K562 (cell line): ENCODE measurements at regions of chr4 and their contacts with region 1.

Region 1: GRCh38 chr4:997375-998071 is 4.3 kb upstream of the SLC26A1 start:
- DNase-seq: peak; percentile 76 to 90 (median 87)
- ATAC-seq: peak; percentile 58
- H3K4me3 ChIP-seq: peak overlapping the region; percentile 47
- H3K27ac ChIP-seq: peak overlapping the region; percentile 81
- H3K4me1 ChIP-seq: peaks cover 37 to 76% of the 10 kb centered on the region in 2 experiments
- H3K27me3 ChIP-seq: no peaks in the 10 kb centered on the region
- CTCF ChIP-seq: no peak
- EP300 ChIP-seq: no peak
- POLR2A ChIP-seq: no peak; the same call in 1 of the 2 replicates
- RAD21 ChIP-seq: no peak

Region 2: GRCh38 chr4:1043658-1044468 is 46.3 kb after region 1 on chr4:
- CTCF ChIA-PET with region 1: no interaction called
- POLR2A ChIA-PET with region 1: interaction called, 3 read pairs
- in situ Hi-C with region 1: no loop called
- intact Hi-C with region 1: loop called (anchors 10 kb)
- DNase-seq: peak; percentile 94 to 96 (median 96)
- ATAC-seq: peak; percentile 87
- H3K4me3 ChIP-seq: no peak overlapping the region
- H3K27ac ChIP-seq: peak overlapping the region; percentile 97
- H3K4me1 ChIP-seq: peaks cover 50 to 86% of the 10 kb centered on the region in 2 experiments
- H3K27me3 ChIP-seq: peaks cover 3 to 16% of the 10 kb centered on the region in 2 experiments; a peak in 4 of 5 replicates
- CTCF ChIP-seq: 0 out of 6 replicates have a peak, but pooled peaks of 1 of the 3 experiments have one; percentile 0
- EP300 ChIP-seq: peak; percentile 95
- POLR2A ChIP-seq: peak; percentile 68
- RAD21 ChIP-seq: peak in 1 of 2 experiments; percentile 22; a peak in 1 of 4 replicates